ENCODE measurements at regions of chr7 and their contacts with region 1.

Region 1: GRCh38 chr7:24701261-24702235 is 55.7 kb downstream of the GSDME start:
- DNase-seq: peak; percentile 87
- H3K4me3 Mint-ChIP-seq: no peak overlapping the region
- H3K27ac Mint-ChIP-seq: no peak overlapping the region
- H3K4me1 Mint-ChIP-seq: peaks cover 30% of the 10 kb centered on the region
- H3K27me3 Mint-ChIP-seq: no peaks in the 10 kb centered on the region
- CTCF ChIP-seq: no peak

Region 2: DNA sequence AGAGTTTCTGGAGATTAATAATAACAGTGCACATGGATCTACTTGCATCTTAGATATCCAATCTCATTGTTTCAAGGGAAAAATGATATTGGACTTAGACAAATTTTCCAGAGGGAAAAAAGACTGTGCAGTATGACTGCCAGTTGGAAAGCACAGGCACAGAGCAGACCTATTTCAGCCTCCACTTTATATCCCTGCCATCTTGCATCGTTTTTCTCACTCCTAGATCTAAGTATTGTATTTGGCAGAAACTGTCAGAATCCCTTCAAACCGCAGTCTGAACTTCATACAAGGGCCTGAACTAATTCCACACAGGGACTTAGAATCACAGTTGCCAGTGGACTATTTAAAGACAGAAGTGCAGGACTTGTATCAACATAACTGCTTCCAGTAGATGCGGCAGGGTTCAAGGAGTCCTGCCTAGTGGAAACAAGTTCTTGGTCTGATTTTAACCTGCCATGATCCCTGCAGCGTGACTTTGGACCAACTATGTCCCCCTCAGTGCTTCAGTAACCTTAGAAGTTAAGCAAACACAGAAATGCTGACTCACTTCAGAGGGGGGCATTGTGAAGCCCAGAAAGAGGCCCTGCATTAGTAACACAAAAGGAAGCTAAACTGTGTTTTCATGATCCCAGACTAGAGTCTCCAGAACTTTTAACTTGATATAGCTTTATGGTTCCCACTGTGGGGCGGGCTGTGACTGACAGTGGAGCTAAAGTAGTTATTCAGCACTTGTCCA is 224.0 kb before region 1 on chr7:
- CTCF ChIA-PET with region 1: no interaction called
- POLR2A ChIA-PET with region 1: no interaction called
- intact Hi-C with region 1: no loop called
- DNase-seq: peak; percentile 51
- H3K4me3 Mint-ChIP-seq: no peak overlapping the region
- H3K27ac Mint-ChIP-seq: no peak overlapping the region
- H3K4me1 Mint-ChIP-seq: no peaks in the 10 kb centered on the region
- H3K27me3 Mint-ChIP-seq: peaks cover 32% of the 10 kb centered on the region
- CTCF ChIP-seq: no peak

Region 3: GRCh38 chr7:24690251-24690650 is 11.3 kb before region 1 on chr7:
- CTCF ChIA-PET with region 1: interaction called, 5 read pairs
- POLR2A ChIA-PET with region 1: interaction called, 18 read pairs
- intact Hi-C with region 1: no loop called
- DNase-seq: peak; percentile 54
- H3K4me3 Mint-ChIP-seq: no peak overlapping the region
- H3K27ac Mint-ChIP-seq: peak overlapping the region; percentile 59
- H3K4me1 Mint-ChIP-seq: peaks cover 5% of the 10 kb centered on the region
- H3K27me3 Mint-ChIP-seq: no peaks in the 10 kb centered on the region
- CTCF ChIP-seq: no peak

Region 4: GRCh38 chr7:25369786-25370185 is 668.2 kb after region 1 on chr7:
- CTCF ChIA-PET with region 1: no interaction called
- POLR2A ChIA-PET with region 1: no interaction called
- intact Hi-C with region 1: no loop called
- DNase-seq: no peak
- H3K4me3 Mint-ChIP-seq: no peak overlapping the region
- H3K27ac Mint-ChIP-seq: no peak overlapping the region
- H3K4me1 Mint-ChIP-seq: no peaks in the 10 kb centered on the region
- H3K27me3 Mint-ChIP-seq: peaks cover 76% of the 10 kb centered on the region
- CTCF ChIP-seq: no peak

Measured in MCF 10A (cell line).